ENCODE measurements at regions of chr5 and their contacts with region 1.

Region 1: GRCh38 chr5:180090098-180090768 is 18.7 kb upstream of the RNF130 start:
- DNase-seq: peak; percentile 89
- ATAC-seq: peak; percentile 85
- H3K4me3 Mint-ChIP-seq: peak overlapping the region; percentile 74
- H3K27ac Mint-ChIP-seq: peak overlapping the region; percentile 67
- H3K4me1 Mint-ChIP-seq: peaks cover 24% of the 10 kb centered on the region
- H3K27me3 Mint-ChIP-seq: no peaks in the 10 kb centered on the region

Region 2: GRCh38 chr5:180071531-180072255 is 18.5 kb before region 1 on chr5 and contains the start of gene RNF130:
- CTCF ChIA-PET with region 1: interaction called, 5 read pairs
- POLR2A ChIA-PET with region 1: interaction called, 3 read pairs
- intact Hi-C with region 1: loop called in 1 of 2 experiments (anchors 1 kb)
- DNase-seq: peak; percentile 93
- ATAC-seq: peak; percentile 79
- H3K4me3 Mint-ChIP-seq: peak within 1 kb of the TSS; percentile 80
- H3K27ac Mint-ChIP-seq: peak within 1 kb of the TSS; percentile 44
- H3K4me1 Mint-ChIP-seq: peaks cover 29% of the 10 kb centered on the region
- H3K27me3 Mint-ChIP-seq: no peaks in the 10 kb centered on the region
- total RNA-seq, gene RNF130: 10.3 to 13.3 TPM

Measured in activated CD4-positive, alpha-beta T cell treated with anti-CD3 and anti-CD28 coated beads for 36 hours (primary cell).